KBM-7 (cell line): ENCODE measurements at regions of chr10 and their contacts with region 1.

Region 1: DNA sequence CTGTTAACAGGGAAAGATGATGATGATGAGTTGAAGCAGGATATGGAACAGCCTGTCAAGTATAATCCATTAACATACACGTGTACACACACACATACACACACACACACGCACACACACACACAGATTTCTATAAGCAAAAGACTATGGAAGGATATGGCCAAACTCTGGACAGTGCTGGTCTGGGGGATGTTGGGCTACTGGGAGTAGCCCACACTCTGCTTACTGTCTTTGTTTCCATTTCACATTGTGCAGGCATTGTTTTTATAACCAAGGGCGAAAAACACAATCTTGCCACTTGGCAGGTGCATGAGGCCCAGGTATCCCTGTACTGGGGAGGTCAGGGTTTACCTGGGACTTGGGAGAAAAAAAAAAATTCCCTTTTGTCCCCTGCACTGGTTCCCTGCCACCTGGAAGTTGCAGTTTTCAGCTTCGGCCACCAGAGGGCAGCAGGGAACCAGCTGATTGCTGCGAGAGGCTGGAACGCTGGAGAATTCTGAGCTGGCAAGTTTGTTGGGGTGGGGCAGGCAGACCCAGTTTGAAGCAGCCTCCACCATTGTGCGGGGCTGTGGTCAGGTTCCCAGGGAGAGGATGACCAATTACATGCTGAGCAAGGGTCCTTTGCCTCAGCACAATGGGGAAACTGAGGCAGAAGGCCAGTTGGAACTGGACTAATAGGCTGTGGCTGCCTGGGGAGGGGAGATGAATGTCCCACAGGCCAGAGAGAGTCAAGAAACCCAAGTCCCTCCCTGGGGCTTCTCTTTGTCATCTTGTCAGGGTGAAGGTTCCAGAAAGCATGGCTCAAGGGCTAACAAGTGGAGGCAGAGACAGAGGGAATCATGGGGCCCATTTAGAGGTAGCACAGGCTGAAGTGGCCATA is 27.3 kb downstream of the PPIF start:
- DNase-seq: peak; percentile 72

Region 2: GRCh38 chr10:79487296-79488194 is 113.0 kb after region 1 on chr10:
- in situ Hi-C with region 1: loop called (anchors 25 kb)
- DNase-seq: peak; percentile 66

Region 3: GRCh38 chr10:79562135-79562756 is 187.7 kb after region 1 on chr10:
- in situ Hi-C with region 1: no loop called
- DNase-seq: peak; percentile 53